Activated CD8-positive, alpha-beta T cell treated with anti-CD3 and anti-CD28 coated beads, Interleukin-2, amount 10 ng/mL, durations not matched to agents 7 days and 5 days (primary cell): ENCODE measurements at regions of chr5 and their contacts with region 1.

Region 1: DNA sequence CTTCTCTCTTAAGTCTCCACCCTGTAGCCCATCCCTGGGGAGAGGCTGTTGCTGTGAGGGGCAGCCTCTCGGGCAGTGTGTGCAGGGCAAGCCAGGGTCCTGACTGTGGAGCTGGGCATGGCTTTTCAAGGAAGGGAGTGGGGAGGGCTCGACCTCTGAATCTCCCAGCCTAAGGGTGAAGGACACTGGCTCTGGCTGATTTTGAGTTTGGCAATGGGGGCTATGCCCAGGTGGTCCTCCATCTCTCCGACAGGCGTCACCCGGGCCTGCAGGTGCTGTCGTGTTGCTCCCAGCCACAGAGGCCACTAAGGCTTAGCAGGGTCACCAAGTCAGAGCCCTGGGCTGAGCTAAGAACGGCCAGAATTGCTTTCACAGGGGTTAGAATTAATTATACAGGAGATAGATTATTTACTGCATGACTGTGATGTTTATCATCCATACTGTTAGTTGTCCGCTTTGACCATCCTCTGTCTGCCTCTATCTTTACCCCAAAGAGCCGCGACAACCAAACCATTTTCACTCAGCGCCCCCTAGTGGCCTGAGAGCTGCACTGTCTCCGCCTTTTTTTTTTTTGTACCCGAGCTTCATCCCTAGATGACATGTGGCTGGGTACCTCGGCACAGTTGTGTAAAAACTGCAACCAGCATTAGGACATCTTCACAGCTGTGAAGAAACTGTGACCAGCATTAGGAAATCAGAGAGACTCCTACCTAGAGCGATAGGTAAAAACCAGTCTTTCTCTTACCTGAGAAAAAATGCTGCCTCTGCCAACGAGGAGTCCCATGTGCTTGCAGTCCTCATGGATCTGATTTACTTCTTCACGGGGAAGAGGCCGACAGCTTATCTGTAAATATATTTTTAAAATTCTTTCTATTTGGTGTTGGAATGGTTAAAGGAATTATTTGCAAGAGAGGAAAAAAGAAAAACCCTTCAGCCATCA is 44.5 kb downstream of the AGXT2 start:
- DNase-seq: peak; percentile 70
- ATAC-seq: peak; percentile 79
- H3K4me3 Mint-ChIP-seq: no peak overlapping the region
- H3K27ac Mint-ChIP-seq: no peak overlapping the region
- H3K4me1 Mint-ChIP-seq: no peaks in the 10 kb centered on the region
- H3K27me3 Mint-ChIP-seq: peaks cover 10% of the 10 kb centered on the region

Region 2: GRCh38 chr5:34486160-34486848 is 517.0 kb before region 1 on chr5:
- CTCF ChIA-PET with region 1: interaction called, 10 read pairs
- POLR2A ChIA-PET with region 1: no interaction called
- DNase-seq: peak; percentile 72
- ATAC-seq: peak; percentile 53
- H3K4me3 Mint-ChIP-seq: no peak overlapping the region
- H3K27ac Mint-ChIP-seq: no peak overlapping the region
- H3K4me1 Mint-ChIP-seq: no peaks in the 10 kb centered on the region
- H3K27me3 Mint-ChIP-seq: peaks cover 21% of the 10 kb centered on the region

Region 3: DNA sequence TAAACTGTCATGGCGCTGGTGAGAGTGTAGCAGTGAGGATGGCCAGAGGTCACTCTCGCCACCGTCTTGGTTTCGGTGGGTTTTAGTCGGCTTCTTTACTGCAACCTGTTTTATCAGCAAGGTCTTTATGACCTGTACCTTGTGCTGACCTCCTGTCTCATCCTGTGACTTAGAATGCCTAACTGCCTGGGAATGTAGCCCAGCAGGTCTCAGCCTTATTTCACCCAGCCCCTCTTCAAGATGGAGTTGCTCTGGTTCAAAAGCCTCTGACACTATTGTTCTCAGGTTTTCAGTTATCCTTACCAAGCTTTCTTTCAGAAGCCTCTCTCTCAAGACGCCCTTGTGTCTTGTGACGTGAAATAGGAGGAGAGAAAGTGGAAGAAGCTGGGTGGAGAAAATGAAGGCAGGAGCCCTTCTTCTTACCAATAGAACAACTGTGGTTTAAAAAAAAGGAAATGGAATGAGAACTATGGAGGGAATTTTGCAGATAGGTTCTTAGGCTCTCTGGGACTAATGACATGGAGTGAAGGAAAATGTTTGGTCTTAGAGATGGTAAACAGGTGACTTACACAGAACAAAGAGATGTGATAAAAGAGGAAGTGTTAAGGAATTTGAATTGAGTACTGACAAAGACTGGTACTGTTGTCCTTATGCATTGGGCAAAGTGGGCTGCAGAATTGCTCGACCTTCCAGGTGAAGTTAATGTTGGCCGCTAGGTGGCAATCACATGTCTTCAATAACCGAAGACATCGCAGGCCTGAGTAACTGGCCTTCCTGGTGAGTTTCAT is 480.5 kb before region 1 on chr5:
- CTCF ChIA-PET with region 1: interaction called, 11 read pairs
- POLR2A ChIA-PET with region 1: no interaction called
- DNase-seq: peak; percentile 70
- ATAC-seq: peak; percentile 86
- H3K4me3 Mint-ChIP-seq: no peak overlapping the region
- H3K27ac Mint-ChIP-seq: no peak overlapping the region
- H3K4me1 Mint-ChIP-seq: peaks cover 4% of the 10 kb centered on the region
- H3K27me3 Mint-ChIP-seq: peaks cover 4% of the 10 kb centered on the region

Region 4: DNA sequence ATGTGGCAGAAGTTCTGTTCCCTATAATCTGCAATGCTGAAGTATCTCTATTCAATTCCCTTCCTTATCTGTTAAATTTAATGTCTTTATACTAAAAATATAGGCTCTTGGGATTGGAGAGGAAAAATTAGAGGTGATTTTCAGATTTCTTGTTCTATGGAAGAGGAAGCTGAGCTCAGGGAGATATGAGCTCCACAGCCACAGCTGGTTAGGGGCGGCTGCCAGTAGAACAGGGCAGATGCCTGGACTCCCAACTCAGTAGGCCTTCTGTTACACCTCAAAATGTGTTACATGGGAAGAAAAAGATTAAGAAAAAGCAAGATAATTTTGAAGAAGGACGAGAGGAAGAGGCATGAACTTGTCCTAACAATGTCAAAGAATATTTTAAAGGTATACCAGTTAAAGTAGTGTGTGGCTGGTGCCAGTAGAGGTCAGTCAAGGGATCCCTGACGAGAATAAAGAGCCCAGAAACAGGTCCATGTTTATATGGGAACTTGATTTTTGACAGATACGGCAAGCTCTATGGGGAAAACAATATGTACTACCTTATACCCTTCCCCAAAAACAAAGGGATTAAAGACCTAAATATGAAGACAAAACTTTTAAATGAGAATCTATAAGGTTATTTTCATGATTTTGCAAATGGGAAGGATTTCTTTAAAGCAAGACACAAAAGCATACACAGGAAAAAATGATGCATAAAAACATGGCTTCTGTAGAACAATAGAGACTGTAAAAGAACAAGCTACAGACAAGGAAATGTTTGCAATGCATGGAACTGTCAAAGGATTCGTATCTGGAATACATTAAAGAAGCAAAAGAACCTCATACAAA is 45.2 kb before region 1 on chr5:
- CTCF ChIA-PET with region 1: interaction called, 18 read pairs
- POLR2A ChIA-PET with region 1: no interaction called
- DNase-seq: no peak
- ATAC-seq: no peak
- H3K4me3 Mint-ChIP-seq: no peak overlapping the region
- H3K27ac Mint-ChIP-seq: no peak overlapping the region
- H3K4me1 Mint-ChIP-seq: peaks cover 19% of the 10 kb centered on the region
- H3K27me3 Mint-ChIP-seq: no peaks in the 10 kb centered on the region

Region 5: DNA sequence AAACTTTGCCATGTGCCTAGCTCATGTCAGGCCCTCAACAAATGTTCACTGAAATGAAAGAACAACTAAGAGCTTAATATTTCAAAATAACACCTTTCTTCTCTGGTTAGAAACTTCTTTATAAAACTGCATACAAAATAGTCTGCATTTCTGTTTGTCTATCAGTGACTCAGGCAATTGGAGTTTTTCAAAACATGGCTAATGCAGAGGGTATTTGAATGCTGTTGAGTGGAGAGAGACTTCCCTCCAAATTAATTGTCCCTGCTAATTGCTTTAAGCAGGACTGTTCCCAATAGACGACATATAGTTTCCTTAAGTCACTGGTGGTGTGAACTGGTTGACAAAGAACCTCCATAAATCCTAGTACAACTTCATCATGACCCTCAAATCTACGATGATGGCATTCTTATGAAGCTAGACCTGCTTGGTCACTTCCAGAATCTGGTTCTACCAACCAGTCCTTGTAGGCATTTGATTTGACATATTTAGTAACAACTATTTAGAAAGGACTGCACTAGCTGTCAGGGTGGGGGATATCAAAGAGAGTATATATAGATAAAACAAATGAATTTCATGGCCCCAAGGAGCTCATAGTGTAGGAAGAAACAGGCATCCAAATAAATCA is 142.5 kb after region 1 on chr5:
- CTCF ChIA-PET with region 1: no interaction called
- POLR2A ChIA-PET with region 1: no interaction called
- DNase-seq: no peak
- ATAC-seq: no peak
- H3K4me3 Mint-ChIP-seq: no peak overlapping the region
- H3K27ac Mint-ChIP-seq: no peak overlapping the region
- H3K4me1 Mint-ChIP-seq: no peaks in the 10 kb centered on the region
- H3K27me3 Mint-ChIP-seq: peaks cover 14% of the 10 kb centered on the region